Common myeloid progenitor, CD34-positive (primary cell): ENCODE measurements at regions of chr1 and their contacts with region 1.

Region 1: GRCh38 chr1:205523891-205524793 is 19.7 kb downstream of the CDK18 start:
- DNase-seq: peak; percentile 56 to 82 (median 71)
- H3K4me3 ChIP-seq: no peak overlapping the region
- H3K27ac ChIP-seq: no peak overlapping the region
- H3K4me1 ChIP-seq: peaks cover 0 to 10% (median 3%) of the 10 kb centered on the region in 4 experiments
- H3K27me3 ChIP-seq: no peaks in the 10 kb centered on the region

Region 2: DNA sequence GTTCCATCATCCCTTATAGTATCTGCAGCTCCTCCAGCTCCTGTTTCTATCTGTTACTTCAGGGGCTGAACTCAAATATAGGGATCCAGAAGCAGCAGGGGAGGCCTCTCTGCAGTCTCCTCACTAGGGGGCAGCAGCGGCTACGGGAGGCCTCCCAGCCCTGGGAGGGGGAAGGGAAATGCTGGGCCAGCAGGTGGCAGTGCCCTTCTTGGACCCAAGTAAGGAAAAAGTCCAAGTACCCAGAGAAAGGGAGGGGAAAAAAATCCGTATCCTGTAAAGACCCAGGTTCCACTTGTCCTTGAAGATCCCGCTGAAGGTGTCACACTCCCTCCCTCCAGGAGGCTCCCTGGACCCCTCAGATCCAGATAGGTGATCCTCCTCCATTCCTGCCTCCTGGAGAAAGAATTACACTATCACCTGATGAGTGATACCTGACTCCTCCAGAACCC is 188.5 kb before region 1 on chr1:
- CTCF ChIA-PET with region 1: interaction called, 13 read pairs
- POLR2A ChIA-PET with region 1: no interaction called
- DNase-seq: peak; percentile 80 to 84 (median 84)
- H3K4me3 ChIP-seq: no peak overlapping the region
- H3K27ac ChIP-seq: no peak overlapping the region
- H3K4me1 ChIP-seq: no peaks in the 10 kb centered on the region
- H3K27me3 ChIP-seq: peaks cover 0 to 5% (median 0%) of the 10 kb centered on the region in 5 experiments

Region 3: DNA sequence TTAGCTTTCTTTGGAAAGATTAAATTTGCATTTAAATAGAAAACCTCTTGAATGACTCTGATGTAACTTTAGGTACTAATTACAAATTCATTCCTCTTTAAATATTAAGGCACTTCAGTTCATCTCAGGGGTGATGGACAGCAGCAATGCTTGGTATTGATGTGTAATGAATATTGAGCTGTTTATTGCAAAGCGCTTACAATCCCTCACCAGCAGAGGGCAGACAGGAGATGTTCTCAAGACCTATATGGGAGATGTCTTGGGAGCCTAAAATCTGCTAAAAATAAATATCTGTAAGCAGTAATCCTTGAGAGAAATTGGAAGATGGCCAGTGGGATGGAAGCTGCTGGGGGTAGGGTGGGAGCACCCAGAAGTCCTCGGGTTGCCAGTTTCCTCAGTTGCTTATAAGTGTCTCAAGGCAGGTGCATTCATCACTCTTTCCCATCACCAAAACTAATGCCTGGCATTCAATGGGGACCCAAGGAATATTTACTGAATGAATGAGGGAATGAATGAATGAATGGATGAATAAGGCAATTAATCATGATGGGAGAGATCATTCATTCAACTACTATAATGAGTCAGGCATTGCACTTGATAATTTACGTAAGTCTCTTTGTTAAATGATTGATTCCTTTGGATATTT is 169.8 kb before region 1 on chr1:
- CTCF ChIA-PET with region 1: interaction called, 27 read pairs
- POLR2A ChIA-PET with region 1: no interaction called
- DNase-seq: peak; percentile 68 to 85 (median 78)
- H3K4me3 ChIP-seq: no peak overlapping the region
- H3K27ac ChIP-seq: no peak overlapping the region
- H3K4me1 ChIP-seq: no peaks in the 10 kb centered on the region
- H3K27me3 ChIP-seq: peaks cover 0 to 13% (median 2%) of the 10 kb centered on the region in 5 experiments

Region 4: GRCh38 chr1:205391386-205391785 is 132.8 kb before region 1 on chr1:
- CTCF ChIA-PET with region 1: interaction called, 41 read pairs
- POLR2A ChIA-PET with region 1: no interaction called
- DNase-seq: no peak
- H3K4me3 ChIP-seq: no peak overlapping the region
- H3K27ac ChIP-seq: no peak overlapping the region
- H3K4me1 ChIP-seq: no peaks in the 10 kb centered on the region
- H3K27me3 ChIP-seq: peaks cover 2 to 15% (median 5%) of the 10 kb centered on the region in 5 experiments

Region 5: DNA sequence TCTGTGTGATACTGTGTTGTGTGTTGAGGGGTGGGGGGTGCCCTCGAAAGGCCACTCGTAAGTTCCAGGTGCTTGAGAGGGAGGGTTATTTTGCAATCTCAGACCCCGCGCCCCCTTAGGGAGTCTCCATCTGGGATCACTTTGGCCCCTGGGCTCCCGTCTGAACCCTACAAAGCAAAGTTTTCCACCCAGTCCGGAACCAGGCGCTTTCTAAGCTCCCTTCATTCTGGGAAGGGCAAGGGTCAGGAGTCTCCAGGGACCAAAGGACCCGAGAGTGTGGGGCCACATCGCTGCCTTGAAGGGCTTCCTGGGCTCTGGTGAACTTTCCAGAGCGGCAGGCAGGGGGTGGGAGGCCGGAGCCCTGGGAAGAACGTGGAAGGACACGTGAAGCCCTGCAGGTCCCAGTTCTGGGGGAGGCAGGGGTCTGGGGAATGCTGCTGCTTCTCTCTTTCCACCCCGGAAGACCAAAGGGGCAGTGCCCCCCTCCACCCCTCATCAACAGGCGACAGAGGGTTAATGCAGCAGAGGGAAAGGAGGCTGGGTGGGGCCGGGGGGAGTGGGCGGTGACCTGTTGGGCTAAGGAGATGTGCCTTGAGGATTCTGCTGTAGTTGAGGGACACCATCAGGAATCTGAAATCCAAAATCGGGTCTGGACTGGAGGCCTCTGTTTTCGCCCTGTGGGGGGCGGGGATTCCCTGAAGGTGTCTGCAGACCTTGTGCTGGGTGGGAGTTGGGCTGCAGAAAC is 19.0 kb before region 1 on chr1:
- CTCF ChIA-PET with region 1: interaction called, 463 read pairs
- POLR2A ChIA-PET with region 1: no interaction called
- DNase-seq: no peak
- H3K4me3 ChIP-seq: peak overlapping the region; percentile 54 to 86 (median 68)
- H3K27ac ChIP-seq: no peak overlapping the region
- H3K4me1 ChIP-seq: peaks cover 0 to 24% (median 20%) of the 10 kb centered on the region in 4 experiments
- H3K27me3 ChIP-seq: peaks cover 0 to 2% (median 0%) of the 10 kb centered on the region in 5 experiments

Region 6: DNA sequence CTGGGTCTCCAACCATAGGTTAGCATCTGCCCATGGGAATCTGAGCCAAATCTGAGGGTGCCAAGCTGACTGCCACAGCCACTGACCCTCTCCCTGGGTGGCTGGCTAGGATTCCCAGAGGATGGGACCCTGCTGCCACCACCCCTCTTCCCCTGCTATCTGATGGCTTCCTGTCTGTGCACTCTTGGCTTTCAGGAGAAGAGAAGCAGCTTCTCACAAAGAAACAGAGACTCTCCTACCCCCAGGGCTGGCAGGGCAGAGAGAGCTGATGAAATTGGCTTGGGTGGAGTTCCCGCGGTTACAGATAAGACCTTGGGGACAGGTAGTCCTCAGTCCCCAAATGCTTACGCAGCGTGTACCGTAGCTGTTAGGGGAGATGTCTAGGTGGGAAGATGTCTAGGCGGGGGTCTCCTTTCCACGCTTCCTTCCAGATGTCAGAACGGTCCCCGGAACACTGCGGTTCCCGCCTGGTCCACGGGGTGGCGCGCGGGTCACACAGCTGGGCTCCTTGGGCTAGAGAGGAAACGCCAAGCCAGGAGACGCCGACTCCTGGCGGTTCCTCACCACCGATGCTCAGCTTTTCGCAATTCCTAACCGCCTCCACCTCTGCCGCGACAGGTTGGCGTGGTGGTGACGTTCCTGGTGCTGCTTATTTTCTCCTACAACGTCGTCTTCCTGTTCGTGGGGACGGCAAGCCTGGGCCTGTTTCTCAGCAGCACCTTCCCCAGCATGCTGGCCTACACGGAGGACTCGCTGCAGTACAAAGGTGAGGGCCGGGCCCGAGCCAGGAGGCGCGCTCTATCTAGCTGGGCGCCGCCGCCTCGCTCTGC is 67.6 kb after region 1 on chr1:
- CTCF ChIA-PET with region 1: interaction called, 17 read pairs
- POLR2A ChIA-PET with region 1: no interaction called
- DNase-seq: peak; percentile 82 to 88 (median 87)
- H3K4me3 ChIP-seq: peak overlapping the region; percentile 0 to 78 (median 65)
- H3K27ac ChIP-seq: peak overlapping the region in 1 of 2 experiments; percentile 50
- H3K4me1 ChIP-seq: peaks cover 3 to 31% (median 19%) of the 10 kb centered on the region in 4 experiments
- H3K27me3 ChIP-seq: no peaks in the 10 kb centered on the region

Region 7: DNA sequence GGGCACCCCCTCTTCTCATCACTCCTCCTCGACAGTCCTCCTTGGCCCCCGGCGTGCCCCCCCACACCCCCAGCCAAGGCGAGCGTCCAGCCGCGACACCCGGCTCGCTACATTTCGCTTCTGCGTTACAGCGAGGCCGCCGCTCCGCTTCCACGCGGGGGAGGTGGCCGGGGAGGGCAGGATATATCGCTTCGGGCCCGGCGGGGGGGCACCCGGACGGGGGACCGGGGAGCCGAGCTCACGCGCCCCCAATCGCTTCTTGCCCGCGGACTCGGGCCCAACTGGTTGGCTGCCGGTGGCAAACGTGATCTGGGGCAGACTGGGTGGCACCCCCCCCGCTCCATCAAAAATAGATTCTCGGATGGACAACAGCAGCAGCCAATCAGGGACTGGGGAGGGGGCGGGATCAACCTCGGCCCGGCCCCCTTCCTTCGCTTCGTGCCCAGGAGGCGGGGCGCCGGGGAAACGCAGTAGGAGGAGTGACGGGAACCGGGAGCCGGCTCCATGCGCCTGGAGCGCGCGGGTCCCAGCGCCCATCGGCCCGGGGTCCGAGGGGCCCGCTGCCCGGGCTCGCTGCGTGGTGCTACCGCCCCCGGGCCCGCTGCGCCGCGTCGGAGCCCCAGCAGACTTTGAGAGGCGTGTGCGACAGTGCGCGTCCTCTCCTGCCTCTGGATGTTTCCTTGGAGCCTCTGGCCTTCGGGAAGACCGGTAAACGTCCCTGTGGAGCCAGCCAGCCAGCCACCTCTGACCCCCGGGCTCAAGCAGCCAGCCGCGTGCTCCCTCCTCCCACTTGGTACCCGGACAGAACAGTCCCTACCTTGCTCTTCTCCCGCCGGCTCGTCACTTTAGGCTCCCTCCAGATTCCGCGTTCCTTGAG is 289.0 kb after region 1 on chr1 and contains the start of gene SLC41A1:
- CTCF ChIA-PET with region 1: no interaction called
- POLR2A ChIA-PET with region 1: no interaction called
- DNase-seq: peak; percentile 90 to 95 (median 95)
- H3K4me3 ChIP-seq: peak within 1 kb of the TSS; percentile 71 to 93 (median 83)
- H3K27ac ChIP-seq: peak within 1 kb of the TSS; percentile 29 to 56
- H3K4me1 ChIP-seq: peaks cover 0 to 22% (median 18%) of the 10 kb centered on the region in 4 experiments
- H3K27me3 ChIP-seq: peaks cover 0 to 15% (median 0%) of the 10 kb centered on the region in 5 experiments